CD8-positive, alpha-beta T cell (primary cell): ENCODE measurements at regions of chr1 and their contacts with region 1.

Region 1: DNA sequence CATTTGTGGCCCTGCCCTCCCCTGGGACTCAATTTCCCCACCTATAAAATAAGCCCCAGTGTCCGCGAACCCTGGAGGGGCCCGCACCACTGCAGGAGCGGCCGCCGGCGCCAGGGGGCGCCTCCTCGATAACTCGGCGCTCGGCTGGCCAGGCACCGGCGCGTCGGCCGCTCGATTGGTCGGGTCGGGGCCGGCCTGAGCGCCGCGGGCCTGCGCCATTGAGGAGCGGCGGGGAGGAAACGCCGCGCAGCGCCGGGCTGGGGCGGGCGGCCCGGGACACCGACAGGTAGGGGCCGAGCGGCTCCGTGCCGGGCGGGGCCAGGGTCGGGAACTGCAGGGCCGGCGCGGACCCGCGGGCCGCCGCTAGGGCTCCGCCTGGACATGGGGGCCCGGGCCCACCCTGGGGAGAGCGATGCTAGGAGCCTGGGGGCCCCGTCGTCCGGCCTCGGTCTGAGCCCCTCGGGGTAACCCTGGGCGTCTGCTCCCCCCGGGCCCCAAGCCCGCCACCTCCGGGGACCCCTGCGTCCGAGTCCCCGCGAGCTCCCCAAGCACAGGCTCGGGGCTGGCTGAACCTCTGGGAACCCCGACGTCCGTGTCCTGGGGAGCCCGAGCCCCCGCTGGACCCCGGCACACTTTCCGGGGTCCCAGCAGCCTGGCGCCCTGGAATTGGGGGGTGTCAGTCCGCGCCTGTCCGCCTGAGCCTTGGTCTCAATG is at the start of gene VPS13D:
- DNase-seq: peak; percentile 68 to 91 (median 84)
- ATAC-seq: peak; percentile 95
- H3K4me3 ChIP-seq: peak within 1 kb of the TSS; percentile 95 to 97
- H3K4me3 Mint-ChIP-seq: peak within 1 kb of the TSS; percentile 93
- H3K27ac ChIP-seq: peak within 1 kb of the TSS; percentile 50 to 70
- H3K27ac Mint-ChIP-seq: peak within 1 kb of the TSS; percentile 86
- H3K4me1 ChIP-seq: peaks cover 15% of the 10 kb centered on the region
- H3K4me1 Mint-ChIP-seq: peaks cover 30% of the 10 kb centered on the region
- H3K27me3 ChIP-seq: no peaks in the 10 kb centered on the region
- H3K27me3 Mint-ChIP-seq: no peaks in the 10 kb centered on the region
- CTCF ChIP-seq: peak; percentile 98
- total RNA-seq, gene VPS13D: 55.8 to 58.7 TPM

Region 2: DNA sequence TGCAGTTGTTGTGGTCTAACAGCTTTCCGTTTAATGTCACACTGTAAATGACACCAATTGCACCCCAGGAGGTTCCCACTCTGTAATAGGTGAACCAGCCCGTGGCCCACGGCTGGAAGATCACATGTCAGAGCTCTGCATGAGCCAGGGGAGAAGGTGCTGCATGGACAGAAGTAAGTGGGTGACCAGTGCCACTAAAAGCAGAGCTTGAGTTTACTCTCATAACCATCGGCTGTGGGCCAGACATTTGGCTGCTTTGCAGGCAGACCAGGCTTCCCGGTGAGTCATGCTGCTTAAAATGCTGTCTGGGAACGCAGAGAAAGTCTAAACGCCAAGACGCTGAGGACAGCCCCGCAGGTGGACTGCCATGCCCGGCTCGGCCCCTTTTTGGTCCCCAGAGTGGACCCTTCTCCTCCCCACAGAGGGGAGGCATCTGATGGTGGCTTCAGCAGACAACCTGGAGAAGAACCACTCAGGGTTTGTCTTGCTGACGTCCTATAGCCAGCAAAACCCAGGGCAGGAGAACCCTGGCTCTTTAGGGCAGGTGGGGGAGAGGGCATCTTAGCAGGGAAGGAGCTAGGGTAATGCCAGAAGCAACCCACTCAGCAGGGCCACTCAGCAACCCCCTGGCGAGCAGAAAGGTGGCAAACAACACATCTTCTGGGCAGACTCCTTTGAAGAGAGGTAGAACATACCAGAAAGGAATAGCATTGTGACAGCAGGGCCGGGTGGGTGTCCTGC is 311.0 kb before region 1 on chr1:
- CTCF ChIA-PET with region 1: no interaction called
- POLR2A ChIA-PET with region 1: no interaction called
- intact Hi-C with region 1: loop called in 1 of 2 experiments (anchors 10 kb)
- DNase-seq: no peak
- ATAC-seq: no peak
- H3K4me3 ChIP-seq: no peak overlapping the region
- H3K4me3 Mint-ChIP-seq: no peak overlapping the region
- H3K27ac ChIP-seq: no peak overlapping the region
- H3K27ac Mint-ChIP-seq: no peak overlapping the region
- H3K4me1 ChIP-seq: peaks cover 20% of the 10 kb centered on the region
- H3K4me1 Mint-ChIP-seq: peaks cover 24% of the 10 kb centered on the region
- H3K27me3 ChIP-seq: no peaks in the 10 kb centered on the region
- H3K27me3 Mint-ChIP-seq: no peaks in the 10 kb centered on the region
- CTCF ChIP-seq: no peak

Region 3: GRCh38 chr1:11934302-11935056 is 295.5 kb before region 1 on chr1 and contains the start of gene PLOD1:
- CTCF ChIA-PET with region 1: no interaction called
- POLR2A ChIA-PET with region 1: no interaction called
- intact Hi-C with region 1: loop called in 1 of 2 experiments (anchors 5 kb)
- DNase-seq: peak; percentile 74 to 91 (median 85)
- ATAC-seq: peak; percentile 100
- H3K4me3 ChIP-seq: peak within 1 kb of the TSS; percentile 63 to 71
- H3K4me3 Mint-ChIP-seq: peak within 1 kb of the TSS; percentile 84
- H3K27ac ChIP-seq: peak within 1 kb of the TSS; percentile 26 to 45
- H3K27ac Mint-ChIP-seq: no peak within 1 kb of the TSS
- H3K4me1 ChIP-seq: peaks cover 11% of the 10 kb centered on the region
- H3K4me1 Mint-ChIP-seq: peaks cover 7% of the 10 kb centered on the region
- H3K27me3 ChIP-seq: no peaks in the 10 kb centered on the region
- H3K27me3 Mint-ChIP-seq: no peaks in the 10 kb centered on the region
- CTCF ChIP-seq: no peak
- total RNA-seq, gene PLOD1: 2.0 to 2.4 TPM

Region 4: DNA sequence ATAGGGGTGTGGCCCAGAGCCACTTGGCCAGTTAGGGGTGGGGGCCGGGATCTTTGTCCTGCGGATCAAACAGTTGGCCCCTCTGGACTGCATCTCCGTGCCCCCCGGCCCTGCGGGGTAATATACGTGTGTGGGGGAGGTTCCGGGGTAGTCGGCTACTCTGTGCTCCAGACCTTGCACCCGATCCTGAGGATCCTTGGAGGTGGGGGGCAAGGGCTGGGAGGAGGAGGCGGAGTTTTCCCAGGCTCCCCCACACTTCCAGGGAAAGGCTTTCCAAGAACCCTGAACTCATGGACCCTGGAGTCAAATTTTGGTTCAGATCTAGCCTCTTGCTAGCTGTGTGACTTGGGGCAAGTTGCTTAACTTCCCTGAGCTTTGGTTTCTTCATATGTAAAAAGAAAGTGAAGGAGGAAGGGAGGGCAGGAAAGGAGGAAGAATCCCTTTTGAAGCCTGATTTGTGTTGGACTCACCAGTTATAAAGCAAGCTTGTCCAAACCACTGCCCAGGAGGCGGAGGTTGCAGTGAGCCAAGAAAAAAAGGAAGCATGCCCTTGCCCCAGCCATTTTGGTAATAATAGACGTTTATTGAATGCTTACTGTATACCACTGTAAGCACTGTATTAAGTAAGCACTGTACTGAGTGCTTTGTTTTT is 210.0 kb before region 1 on chr1:
- CTCF ChIA-PET with region 1: no interaction called
- POLR2A ChIA-PET with region 1: no interaction called
- intact Hi-C with region 1: loop called in 1 of 2 experiments (anchors 1 kb)
- DNase-seq: peak in 2 of 9 experiments; percentile 3 to 27
- ATAC-seq: no peak
- H3K4me3 ChIP-seq: peak overlapping the region; percentile 69 to 94
- H3K4me3 Mint-ChIP-seq: peak overlapping the region; percentile 90
- H3K27ac ChIP-seq: peak overlapping the region; percentile 48 to 59
- H3K27ac Mint-ChIP-seq: peak overlapping the region; percentile 45
- H3K4me1 ChIP-seq: peaks cover 11% of the 10 kb centered on the region
- H3K4me1 Mint-ChIP-seq: peaks cover 15% of the 10 kb centered on the region
- H3K27me3 ChIP-seq: no peaks in the 10 kb centered on the region
- H3K27me3 Mint-ChIP-seq: no peaks in the 10 kb centered on the region
- CTCF ChIP-seq: no peak

Region 5: DNA sequence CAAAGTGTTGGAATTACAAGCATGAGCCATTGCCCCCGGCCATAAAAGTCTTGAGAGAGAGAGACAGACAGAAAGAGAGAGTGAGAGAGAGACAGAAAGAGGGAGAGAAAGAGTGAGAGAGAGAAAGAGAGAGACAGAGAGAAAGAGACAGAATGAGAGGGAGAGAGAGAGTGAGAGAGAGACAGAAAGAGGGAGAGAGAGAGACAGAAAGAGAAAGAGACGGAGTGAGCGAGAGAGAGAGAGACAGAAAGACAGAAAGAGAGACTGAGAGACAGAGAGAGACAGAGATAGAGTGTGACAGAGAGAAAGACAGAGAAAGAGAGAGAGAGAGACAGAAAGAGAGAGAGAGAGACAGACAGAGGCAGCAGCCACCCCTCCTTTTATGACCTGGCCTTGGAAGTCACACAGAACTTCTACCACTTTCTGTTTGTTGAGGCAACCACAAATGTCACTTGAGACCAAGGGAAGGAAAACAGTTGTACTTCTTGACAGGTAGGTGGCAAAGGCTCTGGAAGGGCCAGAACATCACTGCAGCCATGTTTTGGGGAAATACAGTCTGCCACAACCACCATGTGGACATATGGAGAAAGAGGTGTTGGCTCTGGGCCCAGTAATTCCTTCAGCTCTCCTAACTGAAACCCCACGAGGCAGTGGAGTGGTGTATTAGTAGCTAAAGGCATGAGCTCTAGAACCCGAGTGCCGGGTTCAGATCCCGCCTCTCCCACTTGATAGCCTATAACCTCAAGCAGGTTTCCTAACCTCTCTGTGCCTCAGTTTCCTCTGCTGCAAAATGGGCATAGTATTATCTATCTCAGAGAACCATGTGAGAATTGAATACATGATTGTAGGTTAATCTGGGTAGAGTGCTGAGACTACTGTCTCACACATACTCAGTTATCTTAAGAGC is 116.3 kb before region 1 on chr1:
- CTCF ChIA-PET with region 1: interaction called, 9 read pairs
- POLR2A ChIA-PET with region 1: no interaction called
- intact Hi-C with region 1: loop called in 1 of 2 experiments (anchors 5 kb)
- DNase-seq: no peak
- ATAC-seq: no peak
- H3K4me3 ChIP-seq: no peak overlapping the region
- H3K4me3 Mint-ChIP-seq: no peak overlapping the region
- H3K27ac ChIP-seq: no peak overlapping the region
- H3K27ac Mint-ChIP-seq: peak overlapping the region; percentile 0
- H3K4me1 ChIP-seq: no peaks in the 10 kb centered on the region
- H3K4me1 Mint-ChIP-seq: peaks cover 3% of the 10 kb centered on the region
- H3K27me3 ChIP-seq: no peaks in the 10 kb centered on the region
- H3K27me3 Mint-ChIP-seq: no peaks in the 10 kb centered on the region
- CTCF ChIP-seq: no peak

Region 6: DNA sequence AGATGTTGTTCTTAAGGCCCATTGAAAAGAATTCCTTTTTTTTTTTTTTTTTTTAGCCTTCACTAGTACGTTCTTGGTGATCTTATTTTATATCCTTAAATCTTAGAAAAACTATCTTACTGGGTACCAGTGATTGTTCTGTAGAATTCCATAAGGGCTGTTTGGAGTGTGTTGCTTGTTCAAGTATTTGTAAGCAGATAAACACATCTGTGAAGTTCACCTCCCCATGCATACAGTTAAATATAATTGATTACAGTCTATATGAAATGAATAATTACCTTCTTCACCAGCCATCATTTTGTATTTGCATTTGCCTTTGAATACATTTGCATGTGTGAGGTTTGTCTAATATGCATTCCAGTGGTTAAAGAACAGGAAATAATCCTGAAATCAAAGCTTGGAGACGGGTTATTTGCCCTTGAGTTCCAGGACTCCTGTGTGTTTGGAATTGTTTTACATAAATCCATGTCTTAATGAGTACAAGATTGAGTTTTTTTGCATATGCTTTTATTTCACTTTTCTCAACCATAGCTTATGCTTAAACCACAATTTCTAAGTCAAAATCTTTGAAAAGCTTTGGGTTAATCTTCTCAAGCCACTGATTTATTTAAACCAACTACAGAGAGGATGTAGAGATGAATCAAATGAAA is 72.9 kb after region 1 on chr1:
- CTCF ChIA-PET with region 1: no interaction called
- POLR2A ChIA-PET with region 1: no interaction called
- intact Hi-C with region 1: no loop called
- DNase-seq: no peak
- ATAC-seq: no peak
- H3K4me3 ChIP-seq: no peak overlapping the region
- H3K4me3 Mint-ChIP-seq: no peak overlapping the region
- H3K27ac ChIP-seq: no peak overlapping the region
- H3K27ac Mint-ChIP-seq: no peak overlapping the region
- H3K4me1 ChIP-seq: no peaks in the 10 kb centered on the region
- H3K4me1 Mint-ChIP-seq: no peaks in the 10 kb centered on the region
- H3K27me3 ChIP-seq: no peaks in the 10 kb centered on the region
- H3K27me3 Mint-ChIP-seq: no peaks in the 10 kb centered on the region
- CTCF ChIP-seq: no peak

Region 7: DNA sequence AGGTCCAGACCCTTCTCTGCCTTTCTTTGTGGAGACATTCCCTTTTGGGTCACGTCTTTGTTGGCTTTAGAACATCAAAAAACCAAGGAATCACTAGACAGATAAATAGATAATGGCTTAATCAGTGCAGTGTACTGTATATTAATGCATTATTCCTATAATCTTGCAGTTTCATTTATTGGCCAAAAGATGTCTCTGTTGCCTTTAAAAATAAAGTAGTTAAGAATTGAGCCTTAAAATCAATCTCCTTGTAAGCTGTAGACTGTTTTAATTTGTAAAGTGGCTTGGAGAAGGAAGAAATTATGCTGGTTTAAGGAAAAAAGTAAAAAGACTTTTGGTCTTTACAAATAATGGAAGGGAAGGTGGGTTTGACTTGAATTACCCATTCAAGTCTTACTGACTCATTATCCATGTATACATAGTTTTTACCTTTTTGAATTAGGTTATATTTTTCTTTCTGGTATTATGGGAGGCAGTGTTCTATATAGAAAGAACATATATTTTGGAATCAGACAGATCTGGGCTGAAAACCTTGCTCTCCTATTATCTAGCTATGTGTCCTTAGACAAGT is 84.4 kb after region 1 on chr1:
- CTCF ChIA-PET with region 1: no interaction called
- POLR2A ChIA-PET with region 1: no interaction called
- intact Hi-C with region 1: no loop called
- DNase-seq: peak in 2 of 9 experiments; percentile 19 to 34
- ATAC-seq: peak; percentile 36
- H3K4me3 ChIP-seq: no peak overlapping the region
- H3K4me3 Mint-ChIP-seq: no peak overlapping the region
- H3K27ac ChIP-seq: no peak overlapping the region
- H3K27ac Mint-ChIP-seq: no peak overlapping the region
- H3K4me1 ChIP-seq: no peaks in the 10 kb centered on the region
- H3K4me1 Mint-ChIP-seq: no peaks in the 10 kb centered on the region
- H3K27me3 ChIP-seq: no peaks in the 10 kb centered on the region
- H3K27me3 Mint-ChIP-seq: no peaks in the 10 kb centered on the region
- CTCF ChIP-seq: peak; percentile 73